CD4-positive, alpha-beta T cell (primary cell): ENCODE measurements at regions of chr21 and their contacts with region 1.

Region 1: GRCh38 chr21:42233067-42233961 is 14.4 kb downstream of the ABCG1 start:
- DNase-seq: peak; percentile 41 to 95 (median 74)
- ATAC-seq: peak; percentile 47
- H3K4me3 ChIP-seq: peak overlapping the region; percentile 57
- H3K4me3 Mint-ChIP-seq: peak overlapping the region; percentile 85
- H3K27ac ChIP-seq: peak overlapping the region; percentile 94
- H3K27ac Mint-ChIP-seq: peak overlapping the region; percentile 90
- H3K4me1 ChIP-seq: peaks cover 91% of the 10 kb centered on the region
- H3K4me1 Mint-ChIP-seq: peaks cover 97% of the 10 kb centered on the region
- H3K27me3 ChIP-seq: no peaks in the 10 kb centered on the region
- H3K27me3 Mint-ChIP-seq: no peaks in the 10 kb centered on the region
- CTCF ChIP-seq: peak; percentile 14

Region 2: DNA sequence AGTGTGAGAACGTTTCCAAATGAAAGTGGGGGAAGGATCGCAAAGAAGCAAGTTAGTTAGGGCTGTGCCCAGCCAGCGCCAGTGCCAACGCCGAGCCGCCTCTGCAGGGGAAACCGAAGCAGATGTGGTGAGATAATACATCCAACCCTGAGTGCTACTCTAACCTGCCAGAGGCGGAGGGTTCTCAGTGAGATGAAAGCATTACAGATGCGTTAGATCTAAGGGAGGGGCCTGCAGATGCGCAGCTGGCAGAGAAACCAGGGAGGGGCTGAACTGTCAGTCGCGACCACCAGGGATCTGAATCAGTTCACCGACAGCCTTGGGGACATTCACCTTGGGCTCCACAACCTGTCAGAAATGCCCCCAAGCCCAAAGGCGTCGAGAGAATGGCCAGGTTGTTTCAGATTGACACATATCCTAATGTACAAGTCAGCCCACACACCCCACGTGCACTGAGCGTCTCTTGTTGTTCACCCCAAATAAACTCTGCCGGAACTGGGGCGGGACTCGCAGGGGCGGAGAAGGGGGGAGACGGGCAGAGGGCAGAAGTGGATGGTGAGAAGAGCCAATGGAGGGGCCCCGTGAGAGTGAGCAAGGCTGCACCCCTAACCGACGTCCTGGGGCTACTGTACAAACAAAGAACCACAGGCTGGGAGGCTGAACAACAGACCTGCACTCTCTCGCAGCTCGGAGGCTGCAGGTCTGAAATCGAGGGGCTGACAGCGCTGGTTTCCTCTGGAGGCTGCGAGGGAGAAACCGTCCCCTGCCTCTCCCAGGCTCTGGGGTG is 170.9 kb before region 1 on chr21:
- CTCF ChIA-PET with region 1: no interaction called
- POLR2A ChIA-PET with region 1: no interaction called
- intact Hi-C with region 1: loop called (anchors 1 to 10 kb)
- DNase-seq: peak; percentile 83 to 97 (median 90)
- ATAC-seq: peak; percentile 84
- H3K4me3 ChIP-seq: peak overlapping the region; percentile 79
- H3K4me3 Mint-ChIP-seq: peak overlapping the region; percentile 81
- H3K27ac ChIP-seq: peak overlapping the region; percentile 89 to 93
- H3K27ac Mint-ChIP-seq: peak overlapping the region; percentile 98
- H3K4me1 ChIP-seq: peaks cover 56% of the 10 kb centered on the region
- H3K4me1 Mint-ChIP-seq: peaks cover 63% of the 10 kb centered on the region
- H3K27me3 ChIP-seq: no peaks in the 10 kb centered on the region
- H3K27me3 Mint-ChIP-seq: no peaks in the 10 kb centered on the region
- CTCF ChIP-seq: no peak

Region 3: DNA sequence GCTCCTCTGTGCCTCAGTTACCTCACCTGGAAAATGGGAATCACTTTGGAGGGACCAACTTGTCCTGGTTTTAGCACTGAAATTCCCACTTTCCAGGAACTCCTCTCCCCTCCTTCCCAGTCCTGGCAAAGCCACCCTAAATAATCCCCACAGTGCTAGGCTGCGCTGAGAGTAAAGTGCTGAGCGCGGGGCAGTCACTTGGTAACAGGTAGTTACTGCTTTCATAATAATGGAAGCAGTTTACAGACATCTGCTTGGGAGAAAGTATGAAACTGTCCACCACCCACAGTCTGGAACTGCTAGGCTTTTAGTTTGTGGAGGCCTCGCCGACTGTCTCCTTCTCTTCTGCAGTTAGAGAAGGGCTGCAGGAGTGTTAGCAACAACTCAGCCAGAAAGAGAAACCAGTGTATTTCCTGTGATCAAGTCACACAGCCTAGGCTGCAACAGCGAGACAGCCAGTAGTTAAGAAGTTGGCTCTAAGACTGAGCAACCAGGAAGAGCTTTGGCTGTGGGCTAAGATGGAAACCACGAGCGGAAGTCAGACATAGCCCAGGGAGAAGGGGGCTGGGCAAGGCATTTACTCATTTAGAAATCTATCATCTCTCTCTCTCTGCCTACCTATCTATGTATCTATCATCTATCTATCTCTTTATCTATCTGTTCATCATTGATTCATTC is 45.2 kb before region 1 on chr21:
- CTCF ChIA-PET with region 1: interaction called, 9 read pairs
- POLR2A ChIA-PET with region 1: interaction called, 13 read pairs
- intact Hi-C with region 1: loop called (anchors 1 to 2 kb)
- DNase-seq: peak; percentile 61 to 94 (median 76)
- ATAC-seq: peak; percentile 90
- H3K4me3 ChIP-seq: peak overlapping the region; percentile 21
- H3K4me3 Mint-ChIP-seq: peak overlapping the region; percentile 74
- H3K27ac ChIP-seq: peak overlapping the region; percentile 83 to 88
- H3K27ac Mint-ChIP-seq: no peak overlapping the region
- H3K4me1 ChIP-seq: peaks cover 89% of the 10 kb centered on the region
- H3K4me1 Mint-ChIP-seq: peaks cover 73% of the 10 kb centered on the region
- H3K27me3 ChIP-seq: no peaks in the 10 kb centered on the region
- H3K27me3 Mint-ChIP-seq: no peaks in the 10 kb centered on the region
- CTCF ChIP-seq: no peak

Region 4: DNA sequence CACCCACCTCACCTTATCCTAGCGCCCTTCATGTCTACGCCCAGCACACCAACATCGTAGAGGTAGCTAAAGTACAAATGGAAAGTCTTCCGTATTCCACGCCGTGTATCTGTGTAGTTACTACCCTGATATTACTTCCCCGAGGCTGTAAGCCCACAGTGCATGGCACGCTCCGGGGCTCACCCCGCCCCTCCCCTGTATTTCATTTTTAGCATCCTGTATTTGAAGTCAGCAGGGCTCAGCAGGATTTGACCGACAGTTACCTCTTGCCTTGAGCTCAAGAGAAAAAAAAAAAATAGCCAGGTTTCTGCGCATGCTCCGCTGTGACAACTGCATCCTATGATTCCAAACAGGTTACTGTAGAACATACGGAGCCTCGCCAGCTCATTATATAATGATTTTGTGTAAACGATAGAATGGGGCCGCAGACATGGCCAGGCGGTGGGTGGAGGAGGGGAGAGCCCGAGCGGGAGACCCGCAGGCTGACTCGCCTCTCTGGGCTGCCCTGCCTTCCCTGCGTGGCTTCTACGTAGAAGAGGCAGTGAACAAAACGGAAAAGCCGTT is 13.1 kb before region 1 on chr21:
- CTCF ChIA-PET with region 1: interaction called, 27 read pairs
- POLR2A ChIA-PET with region 1: interaction called, 33 read pairs
- intact Hi-C with region 1: loop called (anchors 1 to 2 kb)
- DNase-seq: peak; percentile 49 to 96 (median 73)
- ATAC-seq: peak; percentile 87
- H3K4me3 ChIP-seq: peak overlapping the region; percentile 91
- H3K4me3 Mint-ChIP-seq: peak overlapping the region; percentile 93
- H3K27ac ChIP-seq: peak overlapping the region; percentile 88 to 90
- H3K27ac Mint-ChIP-seq: peak overlapping the region; percentile 91
- H3K4me1 ChIP-seq: peaks cover 35% of the 10 kb centered on the region
- H3K4me1 Mint-ChIP-seq: peaks cover 41% of the 10 kb centered on the region
- H3K27me3 ChIP-seq: no peaks in the 10 kb centered on the region
- H3K27me3 Mint-ChIP-seq: no peaks in the 10 kb centered on the region
- CTCF ChIP-seq: no peak

Region 5: DNA sequence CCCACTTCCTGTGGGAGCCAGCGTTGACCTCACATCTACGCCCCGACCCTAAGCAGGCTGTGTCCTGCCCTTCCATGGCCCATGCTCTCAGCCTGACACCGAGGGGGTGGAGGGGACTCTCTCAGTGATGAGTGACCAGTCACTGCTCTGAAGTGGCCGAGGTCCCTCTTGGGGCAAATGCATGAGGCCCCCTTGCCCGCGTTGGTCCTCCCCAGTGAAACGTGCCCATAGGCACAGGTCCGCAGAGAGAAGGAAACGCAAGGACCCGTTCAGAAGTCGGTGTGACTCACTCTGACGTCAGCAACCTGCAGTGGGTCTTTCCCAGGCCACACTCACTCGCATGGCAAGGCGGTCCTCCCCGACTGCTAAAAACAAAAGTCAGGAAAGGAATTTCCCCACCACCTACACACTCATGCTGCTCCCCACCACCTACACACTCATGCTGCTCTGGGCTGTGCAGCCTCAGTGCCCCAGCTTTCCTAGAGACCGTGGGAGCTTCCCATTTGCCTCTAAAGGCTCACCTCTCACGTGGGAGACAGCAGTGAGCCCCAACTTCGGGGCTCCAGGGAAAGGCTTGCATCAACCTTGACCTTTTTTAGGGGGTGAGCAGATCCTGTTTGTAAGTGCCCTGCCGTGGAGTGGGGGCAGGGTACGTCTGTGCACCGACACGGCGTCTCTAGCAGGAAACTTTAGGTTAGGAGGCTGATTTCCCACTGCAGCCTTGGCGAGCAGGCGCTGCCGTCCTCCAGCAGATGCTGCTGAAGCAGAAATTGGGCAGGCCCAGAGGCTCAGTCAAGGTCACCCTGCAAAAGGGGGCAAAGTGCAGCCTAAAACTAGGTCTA is 181.8 kb after region 1 on chr21:
- CTCF ChIA-PET with region 1: no interaction called
- POLR2A ChIA-PET with region 1: interaction called, 3 read pairs
- intact Hi-C with region 1: loop called in 1 of 2 experiments (anchors 10 kb)
- DNase-seq: peak; percentile 69 to 98 (median 85)
- ATAC-seq: peak; percentile 89
- H3K4me3 ChIP-seq: peak overlapping the region; percentile 17
- H3K4me3 Mint-ChIP-seq: peak overlapping the region; percentile 82
- H3K27ac ChIP-seq: peak overlapping the region; percentile 90 to 95
- H3K27ac Mint-ChIP-seq: no peak overlapping the region
- H3K4me1 ChIP-seq: peaks cover 73% of the 10 kb centered on the region
- H3K4me1 Mint-ChIP-seq: peaks cover 63% of the 10 kb centered on the region
- H3K27me3 ChIP-seq: no peaks in the 10 kb centered on the region
- H3K27me3 Mint-ChIP-seq: no peaks in the 10 kb centered on the region
- CTCF ChIP-seq: no peak